ENCODE measurements at regions of chr18 and their contacts with region 1.

Region 1: GRCh38 chr18:80034068-80034851 is at the start of gene RBFA:
- DNase-seq: peak; percentile 100
- ATAC-seq: peak; percentile 94 to 97 (median 94)
- H3K4me3 ChIP-seq: peak within 1 kb of the TSS; percentile 45 to 96 (median 83)
- H3K27ac ChIP-seq: peak within 1 kb of the TSS; percentile 62 to 92 (median 88)
- H3K4me1 ChIP-seq: peaks cover 5 to 24% (median 11%) of the 10 kb centered on the region in 9 donors
- H3K27me3 ChIP-seq: no peaks in the 10 kb centered on the region
- CTCF ChIP-seq: peak in 8 of 9 donors; percentile 24 to 61 (median 38)
- total RNA-seq, gene RBFA: 13.6 to 30.6 (median 19.9) TPM

Region 2: DNA sequence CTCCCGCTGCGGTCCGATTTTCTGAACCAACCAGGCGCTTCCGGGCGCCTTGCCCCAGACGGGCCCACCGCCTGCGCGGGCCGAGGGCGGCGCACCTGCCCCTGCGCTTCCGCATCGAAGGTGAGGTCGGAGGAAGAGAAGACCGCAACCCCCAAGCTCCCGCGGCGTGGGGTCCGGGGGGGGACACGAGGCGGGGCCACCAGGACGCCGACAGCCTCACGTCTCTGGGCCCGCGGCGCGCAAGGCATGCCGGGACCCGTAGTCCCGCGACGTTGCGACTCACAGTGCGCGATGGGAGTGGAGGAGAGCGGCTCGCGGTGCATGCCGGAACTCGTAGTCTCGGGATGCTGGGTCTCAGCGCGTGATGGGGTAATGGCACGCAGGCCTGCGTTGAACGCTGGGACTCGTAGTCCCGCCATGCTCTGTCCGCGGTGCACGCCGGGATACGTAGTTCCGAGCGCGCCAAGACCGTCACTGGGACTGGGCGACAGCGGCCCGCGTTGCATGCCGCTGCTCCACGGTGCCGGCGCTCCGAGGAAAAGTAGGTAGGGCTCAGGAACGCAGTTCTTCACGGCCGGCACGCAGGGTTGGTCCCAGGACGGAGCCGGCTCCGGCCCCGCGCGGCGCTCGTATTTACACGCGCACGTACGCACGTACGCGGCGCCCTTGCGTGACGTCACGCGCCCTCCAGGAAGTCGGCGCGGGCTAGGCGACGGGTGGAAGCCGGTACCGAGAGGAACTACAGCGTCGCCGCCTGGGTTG is 355.0 kb before region 1 on chr18 and contains the start of gene CTDP1:
- intact Hi-C with region 1: loop called in 2 of 10 experiments (anchors 5 kb)
- DNase-seq: peak; percentile 98 to 99
- ATAC-seq: peak; percentile 98 to 99 (median 99)
- H3K4me3 ChIP-seq: peak within 1 kb of the TSS; percentile 66 to 97 (median 82)
- H3K27ac ChIP-seq: peak within 1 kb of the TSS; percentile 88 to 100 (median 97)
- H3K4me1 ChIP-seq: peaks cover 9 to 57% (median 31%) of the 10 kb centered on the region in 9 donors
- H3K27me3 ChIP-seq: no peaks in the 10 kb centered on the region
- CTCF ChIP-seq: no peak
- total RNA-seq, gene CTDP1: 6.8 to 12.5 (median 9.3) TPM

Region 3: GRCh38 chr18:79944126-79944741 is 90.0 kb before region 1 on chr18:
- intact Hi-C with region 1: loop called in 2 of 10 experiments (anchors 10 kb)
- DNase-seq: no peak
- ATAC-seq: peak in 4 of 8 donors; percentile 5 to 21 (median 20)
- H3K4me3 ChIP-seq: no peak overlapping the region
- H3K27ac ChIP-seq: no peak overlapping the region
- H3K4me1 ChIP-seq: peaks cover 12 to 84% (median 48%) of the 10 kb centered on the region in 9 donors
- H3K27me3 ChIP-seq: no peaks in the 10 kb centered on the region
- CTCF ChIP-seq: no peak

Region 4: DNA sequence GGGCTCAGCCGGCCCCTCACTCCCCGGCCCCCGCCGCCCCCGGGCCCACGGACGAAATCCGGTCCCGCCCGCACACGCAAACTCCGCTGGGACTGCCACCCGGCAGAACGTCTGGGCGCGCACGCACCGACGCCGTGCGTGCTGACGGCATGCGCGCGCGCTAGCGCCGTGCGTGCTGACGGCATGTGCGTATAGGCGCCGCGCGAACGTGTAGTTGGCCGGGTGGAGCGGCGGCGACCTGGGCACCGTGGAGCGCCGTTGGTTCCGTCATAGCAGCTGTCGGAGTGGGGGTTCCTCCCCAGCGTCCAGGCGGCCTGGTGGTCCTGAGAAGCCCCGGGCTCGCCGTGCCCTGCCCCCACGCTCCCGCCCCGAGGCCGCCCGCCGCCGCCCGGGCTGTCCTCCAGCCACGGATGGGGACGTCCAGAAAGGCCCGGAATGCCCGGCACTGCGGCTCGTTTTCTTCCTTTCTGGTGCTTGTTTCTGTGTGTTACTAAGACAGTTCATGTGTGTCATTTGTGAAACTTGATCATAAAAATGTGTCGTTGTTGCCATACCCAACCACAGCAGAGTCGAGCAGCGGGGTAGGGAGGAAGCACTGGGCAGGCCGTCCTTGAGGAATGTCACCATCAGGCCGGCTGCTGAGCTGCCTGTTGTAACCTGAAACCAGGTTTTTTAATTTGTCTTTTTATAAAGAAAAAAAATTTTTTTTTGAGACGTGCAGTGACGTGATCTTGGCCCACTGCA is 45.6 kb before region 1 on chr18 and contains the start of gene TXNL4A:
- intact Hi-C with region 1: loop called in 5 of 10 experiments (anchors 2 to 10 kb)
- DNase-seq: peak; percentile 86 to 88
- ATAC-seq: peak; percentile 98 to 99 (median 98)
- H3K4me3 ChIP-seq: peak within 1 kb of the TSS; percentile 70 to 98 (median 93)
- H3K27ac ChIP-seq: peak within 1 kb of the TSS; percentile 92 to 99 (median 96)
- H3K4me1 ChIP-seq: peaks cover 9 to 35% (median 25%) of the 10 kb centered on the region in 9 donors
- H3K27me3 ChIP-seq: no peaks in the 10 kb centered on the region
- CTCF ChIP-seq: no peak
- total RNA-seq, gene TXNL4A: 63.3 to 115 (median 87.2) TPM

Region 5: DNA sequence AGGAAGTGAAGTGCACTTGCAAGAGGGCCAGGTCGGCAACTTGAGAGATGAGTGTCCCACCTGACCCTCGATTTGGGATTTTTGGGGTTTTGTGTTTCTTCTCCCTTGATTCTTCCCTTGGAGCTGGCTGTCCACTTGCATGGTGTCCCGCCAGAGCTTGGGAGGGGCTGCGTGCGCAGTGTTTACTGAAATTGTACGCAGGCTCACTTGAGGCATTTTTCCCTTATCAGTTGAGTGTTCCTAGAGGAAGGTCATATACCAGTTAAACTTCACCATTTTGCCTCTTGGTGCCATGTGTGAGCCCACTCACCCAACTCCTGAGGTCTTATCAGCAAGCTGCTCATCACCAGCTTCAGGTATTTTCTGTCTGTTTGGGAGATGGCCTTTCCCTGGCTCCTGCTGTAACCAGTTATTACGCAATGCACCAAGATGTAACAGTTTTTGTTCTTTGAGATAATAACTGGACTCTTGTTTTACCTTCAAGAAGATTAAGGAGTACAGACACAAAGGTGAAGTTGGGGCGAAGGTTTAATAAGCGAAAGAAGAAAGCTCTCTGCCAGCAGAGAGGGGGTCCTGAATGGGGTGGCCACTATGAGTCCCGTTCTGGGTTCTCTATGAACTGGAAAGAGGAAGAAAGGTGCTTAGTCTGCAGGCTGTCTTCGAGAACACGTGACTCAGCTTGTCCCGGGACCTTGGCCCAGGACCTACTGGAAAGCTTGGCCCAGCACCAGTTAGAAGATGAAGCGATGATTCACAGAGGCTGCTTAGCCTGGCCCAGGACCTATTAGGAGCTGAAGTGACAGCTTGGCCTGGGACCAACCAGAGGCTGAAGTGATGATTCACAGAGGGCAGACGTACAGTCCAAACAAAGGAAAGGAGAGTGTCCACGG is 24.4 kb before region 1 on chr18:
- intact Hi-C with region 1: no loop called
- DNase-seq: peak; percentile 66 to 85
- ATAC-seq: peak; percentile 92 to 99 (median 98)
- H3K4me3 ChIP-seq: no peak overlapping the region
- H3K27ac ChIP-seq: peak overlapping the region in 7 of 10 donors; percentile 18 to 79 (median 66)
- H3K4me1 ChIP-seq: peaks cover 0 to 10% (median 5%) of the 10 kb centered on the region in 9 donors
- H3K27me3 ChIP-seq: no peaks in the 10 kb centered on the region
- CTCF ChIP-seq: no peak

Region 6: DNA sequence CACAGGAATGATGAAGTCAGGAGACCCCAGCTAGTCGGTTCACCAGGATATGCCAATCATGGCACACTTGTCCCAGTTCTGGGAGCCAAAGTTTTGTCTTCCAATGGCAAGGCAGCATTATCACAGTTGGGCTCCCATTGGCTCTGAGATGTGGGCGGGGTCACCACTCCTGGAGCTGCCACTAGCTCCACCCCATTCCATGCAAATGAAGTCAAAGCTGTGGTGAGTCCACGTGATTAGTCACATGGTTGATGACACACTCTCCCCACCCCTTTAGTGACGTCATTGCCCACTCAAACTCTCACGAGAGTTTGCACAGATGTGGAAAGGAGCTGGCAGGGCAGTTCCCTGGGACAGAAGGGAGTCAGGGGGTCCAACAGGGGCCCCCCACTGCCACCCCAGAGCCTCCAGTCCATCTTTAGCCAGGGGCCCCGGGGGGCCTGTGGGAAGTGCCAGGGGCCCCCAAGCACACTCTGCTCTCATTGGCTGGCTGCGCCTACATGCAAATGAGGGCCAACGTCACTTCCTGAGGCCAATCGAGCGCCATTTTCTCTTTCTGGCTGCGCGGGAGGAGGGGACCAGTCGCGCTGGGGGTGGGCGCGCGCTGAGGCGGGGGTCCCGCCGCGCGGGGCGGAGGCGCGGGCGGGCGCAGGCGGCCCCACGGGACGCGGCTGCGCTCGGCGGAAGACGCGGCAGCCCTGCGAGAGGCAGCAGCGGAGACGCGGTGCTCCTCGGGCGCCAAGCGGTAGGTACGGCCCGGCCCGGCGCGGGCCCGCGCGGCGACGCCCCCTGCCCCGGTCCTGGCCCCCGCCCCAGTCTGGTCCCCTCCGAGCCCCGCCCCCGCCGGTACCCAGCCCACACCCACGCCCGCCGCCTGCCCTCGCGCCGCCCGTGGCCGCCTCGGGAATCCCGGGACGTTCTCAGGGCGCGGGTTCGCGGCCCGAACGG is 74.7 kb after region 1 on chr18 and contains the start of gene ADNP2:
- intact Hi-C with region 1: loop called in 4 of 10 experiments (anchors 2 to 10 kb)
- DNase-seq: peak; percentile 64 to 89
- ATAC-seq: peak; percentile 89 to 96 (median 94)
- H3K4me3 ChIP-seq: peak within 1 kb of the TSS; percentile 58 to 86 (median 74)
- H3K27ac ChIP-seq: peak within 1 kb of the TSS; percentile 78 to 96 (median 88)
- H3K4me1 ChIP-seq: peaks cover 0 to 40% (median 28%) of the 10 kb centered on the region in 9 donors
- H3K27me3 ChIP-seq: no peaks in the 10 kb centered on the region
- CTCF ChIP-seq: no peak
- total RNA-seq, gene ADNP2: 6.9 to 12.4 (median 10.9) TPM

Region 7: GRCh38 chr18:80179857-80180551 is 145.7 kb after region 1 on chr18:
- intact Hi-C with region 1: no loop called
- DNase-seq: no peak
- ATAC-seq: no peak
- H3K4me3 ChIP-seq: no peak overlapping the region
- H3K27ac ChIP-seq: no peak overlapping the region
- H3K4me1 ChIP-seq: no peaks in the 10 kb centered on the region
- H3K27me3 ChIP-seq: peaks cover 0 to 3% (median 0%) of the 10 kb centered on the region in 7 donors
- CTCF ChIP-seq: no peak